WTC11 (cell line): ENCODE measurements at regions of chr20 and their contacts with region 1.

Region 1: GRCh38 chr20:20593447-20594170 is 118.8 kb downstream of the RALGAPA2 start:
- DNase-seq: peak; percentile 63
- ATAC-seq: peak; percentile 98
- H3K4me3 Mint-ChIP-seq: no peak overlapping the region
- H3K27ac Mint-ChIP-seq: no peak overlapping the region
- H3K4me1 Mint-ChIP-seq: no peaks in the 10 kb centered on the region
- H3K27me3 Mint-ChIP-seq: no peaks in the 10 kb centered on the region
- CTCF ChIP-seq: no peak

Region 2: GRCh38 chr20:20083807-20084206 is 509.8 kb before region 1 on chr20:
- CTCF ChIA-PET with region 1: interaction called, 14 read pairs
- POLR2A ChIA-PET with region 1: no interaction called
- DNase-seq: no peak
- ATAC-seq: peak; percentile 68
- H3K4me3 Mint-ChIP-seq: no peak overlapping the region
- H3K27ac Mint-ChIP-seq: no peak overlapping the region
- H3K4me1 Mint-ChIP-seq: peaks cover 11% of the 10 kb centered on the region
- H3K27me3 Mint-ChIP-seq: no peaks in the 10 kb centered on the region
- CTCF ChIP-seq: peak; percentile 32; the same call in 1 of the 2 replicates

Region 3: DNA sequence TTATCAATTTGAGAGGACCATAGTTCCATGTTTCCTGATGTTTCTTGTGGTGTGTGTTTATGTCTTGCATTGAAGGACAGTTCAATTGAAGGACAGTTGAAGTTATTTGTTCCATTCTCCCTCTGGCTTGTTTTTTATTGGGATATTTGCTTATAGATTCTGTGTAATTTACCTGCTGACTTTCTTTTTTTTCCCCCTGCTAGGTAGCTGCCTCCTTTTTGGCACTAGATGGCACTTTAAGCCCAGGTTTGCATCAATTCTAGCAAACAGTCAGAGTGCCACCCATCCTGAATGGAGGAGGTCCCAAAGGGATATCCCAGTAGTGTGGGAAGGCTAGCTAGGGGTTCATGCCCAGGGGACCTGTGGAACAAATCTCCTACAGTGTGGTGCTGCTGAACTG is 463.2 kb before region 1 on chr20:
- CTCF ChIA-PET with region 1: interaction called, 30 read pairs
- POLR2A ChIA-PET with region 1: no interaction called
- DNase-seq: no peak
- ATAC-seq: peak; percentile 82
- H3K4me3 Mint-ChIP-seq: no peak overlapping the region
- H3K27ac Mint-ChIP-seq: no peak overlapping the region
- H3K4me1 Mint-ChIP-seq: no peaks in the 10 kb centered on the region
- H3K27me3 Mint-ChIP-seq: peaks cover 5% of the 10 kb centered on the region; the same call in 1 of the 2 replicates
- CTCF ChIP-seq: peak; percentile 27; the same call in 1 of the 2 replicates

Region 4: DNA sequence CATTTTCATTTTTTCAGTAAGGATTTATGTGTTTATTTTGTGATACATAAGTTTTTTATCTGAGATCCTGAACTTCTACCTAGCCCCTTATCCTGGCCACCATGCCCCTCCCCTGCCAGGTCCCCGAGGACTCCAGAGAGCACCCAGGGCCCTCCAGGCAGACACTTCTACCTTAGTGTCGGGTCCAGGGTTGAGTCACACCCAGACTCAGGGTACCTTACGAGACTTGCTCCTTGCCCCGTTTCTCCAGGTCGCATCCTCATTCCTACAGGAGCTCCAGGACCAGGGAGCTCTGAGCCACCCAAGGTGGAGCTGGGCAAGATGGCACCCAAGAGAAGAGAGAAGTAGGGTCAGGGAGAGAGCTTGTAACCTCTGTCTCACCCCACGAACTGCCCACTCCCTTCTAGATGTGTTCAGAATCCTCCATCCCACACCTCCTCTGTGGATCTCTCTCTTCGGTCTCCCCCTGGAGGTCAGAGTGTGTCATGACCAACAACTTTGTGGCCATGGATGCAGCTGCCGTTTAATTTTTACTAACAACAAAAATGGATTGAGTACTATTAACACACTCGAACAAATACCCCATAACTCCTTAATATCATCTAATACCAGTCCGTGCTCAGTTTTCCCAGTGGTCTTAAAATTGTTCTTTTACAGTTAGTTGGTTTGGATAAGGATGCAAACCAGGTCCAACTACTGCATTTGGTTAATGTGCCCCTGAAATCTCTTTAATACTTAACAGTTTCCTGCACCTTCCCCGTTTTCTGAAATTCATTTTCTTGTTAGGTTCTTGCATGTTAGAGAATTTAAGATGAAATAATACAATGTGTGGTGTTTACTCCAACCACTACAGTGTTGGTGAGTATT is 356.3 kb before region 1 on chr20:
- CTCF ChIA-PET with region 1: interaction called, 19 read pairs
- POLR2A ChIA-PET with region 1: no interaction called
- DNase-seq: peak; percentile 54
- ATAC-seq: peak; percentile 92
- H3K4me3 Mint-ChIP-seq: no peak overlapping the region
- H3K27ac Mint-ChIP-seq: no peak overlapping the region
- H3K4me1 Mint-ChIP-seq: peaks cover 10% of the 10 kb centered on the region
- H3K27me3 Mint-ChIP-seq: peaks cover 4% of the 10 kb centered on the region; the same call in 1 of the 2 replicates
- CTCF ChIP-seq: peak; percentile 72

Region 5: GRCh38 chr20:20369250-20370093 is 224.1 kb before region 1 on chr20:
- CTCF ChIA-PET with region 1: interaction called, 23 read pairs
- POLR2A ChIA-PET with region 1: no interaction called
- DNase-seq: peak; percentile 66
- ATAC-seq: peak; percentile 21
- H3K4me3 Mint-ChIP-seq: peak overlapping the region; percentile 80
- H3K27ac Mint-ChIP-seq: peak overlapping the region; percentile 17; the same call in 1 of the 2 replicates
- H3K4me1 Mint-ChIP-seq: peaks cover 51% of the 10 kb centered on the region
- H3K27me3 Mint-ChIP-seq: peaks cover 83% of the 10 kb centered on the region
- CTCF ChIP-seq: no peak

Region 6: GRCh38 chr20:20466341-20466879 is 127.2 kb before region 1 on chr20:
- CTCF ChIA-PET with region 1: interaction called, 13 read pairs
- POLR2A ChIA-PET with region 1: no interaction called
- DNase-seq: no peak
- ATAC-seq: no peak
- H3K4me3 Mint-ChIP-seq: no peak overlapping the region
- H3K27ac Mint-ChIP-seq: no peak overlapping the region
- H3K4me1 Mint-ChIP-seq: peaks cover 53% of the 10 kb centered on the region
- H3K27me3 Mint-ChIP-seq: no peaks in the 10 kb centered on the region
- CTCF ChIP-seq: no peak

Region 7: GRCh38 chr20:20694591-20694990 is 101.0 kb after region 1 on chr20:
- CTCF ChIA-PET with region 1: no interaction called
- POLR2A ChIA-PET with region 1: no interaction called
- DNase-seq: no peak
- ATAC-seq: no peak
- H3K4me3 Mint-ChIP-seq: no peak overlapping the region
- H3K27ac Mint-ChIP-seq: no peak overlapping the region
- H3K4me1 Mint-ChIP-seq: peaks cover 6% of the 10 kb centered on the region; the same call in 1 of the 2 replicates
- H3K27me3 Mint-ChIP-seq: no peaks in the 10 kb centered on the region
- CTCF ChIP-seq: no peak

Region 8: GRCh38 chr20:20816969-20817755 is 223.6 kb after region 1 on chr20:
- CTCF ChIA-PET with region 1: interaction called, 41 read pairs
- POLR2A ChIA-PET with region 1: no interaction called
- DNase-seq: no peak
- ATAC-seq: no peak
- H3K4me3 Mint-ChIP-seq: no peak overlapping the region
- H3K27ac Mint-ChIP-seq: no peak overlapping the region; the same call in 1 of the 2 replicates
- H3K4me1 Mint-ChIP-seq: peaks cover 73% of the 10 kb centered on the region
- H3K27me3 Mint-ChIP-seq: no peaks in the 10 kb centered on the region
- CTCF ChIP-seq: no peak